ENCODE measurements at regions of chr11 and their contacts with region 1.

Region 1: GRCh38 chr11:46554205-46555055 is 39.4 kb downstream of the AMBRA1 start:
- DNase-seq: no peak
- H3K4me3 Mint-ChIP-seq: peak overlapping the region; percentile 58
- H3K27ac Mint-ChIP-seq: peak overlapping the region; percentile 65
- H3K4me1 Mint-ChIP-seq: peaks cover 49% of the 10 kb centered on the region
- H3K27me3 Mint-ChIP-seq: no peaks in the 10 kb centered on the region

Region 2: DNA sequence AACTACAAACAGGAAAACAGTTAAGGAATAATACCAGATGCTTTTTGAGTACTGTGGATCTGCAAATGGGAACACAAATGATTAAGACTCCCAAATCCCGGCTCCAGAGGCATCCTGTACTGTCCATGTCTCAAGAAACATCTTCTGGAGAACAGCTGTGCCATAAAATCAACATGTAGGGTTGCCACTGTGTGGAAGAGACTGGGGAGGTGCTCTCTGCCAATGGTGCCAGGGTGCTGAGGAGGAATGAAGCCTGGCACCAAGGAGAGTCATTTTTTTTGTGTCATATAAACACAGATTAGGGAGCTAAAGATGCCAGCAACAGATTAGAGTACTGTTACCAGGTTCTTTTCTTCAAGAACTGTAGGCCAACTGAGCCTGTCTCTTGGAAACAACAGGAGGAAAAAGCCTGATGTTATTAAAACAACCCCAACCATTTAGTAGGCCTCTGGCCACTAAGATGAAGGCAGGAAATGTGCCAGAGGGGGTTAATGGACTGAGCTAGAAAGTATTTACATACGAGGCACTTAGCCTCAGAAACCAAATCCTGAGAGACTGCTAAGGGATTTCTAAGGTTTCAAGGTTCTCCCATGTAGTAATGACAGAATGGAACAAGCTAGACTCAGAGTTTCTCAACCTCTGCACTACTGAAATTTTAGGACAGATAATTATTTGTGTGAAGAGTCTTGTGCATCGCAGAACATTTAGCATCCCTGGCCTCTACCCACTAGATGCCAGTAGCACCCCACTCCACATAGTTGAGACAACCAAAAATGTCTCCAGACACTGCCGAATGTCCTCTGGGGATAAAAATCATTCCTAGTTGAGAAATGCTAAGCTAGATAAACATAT is 108.3 kb before region 1 on chr11:
- intact Hi-C with region 1: no loop called
- DNase-seq: no peak
- H3K4me3 Mint-ChIP-seq: no peak overlapping the region
- H3K27ac Mint-ChIP-seq: peak overlapping the region; percentile 5
- H3K4me1 Mint-ChIP-seq: peaks cover 7% of the 10 kb centered on the region
- H3K27me3 Mint-ChIP-seq: no peaks in the 10 kb centered on the region

Region 3: GRCh38 chr11:46537537-46538295 is 16.7 kb before region 1 on chr11:
- intact Hi-C with region 1: no loop called
- DNase-seq: peak; percentile 89
- H3K4me3 Mint-ChIP-seq: no peak overlapping the region
- H3K27ac Mint-ChIP-seq: no peak overlapping the region
- H3K4me1 Mint-ChIP-seq: peaks cover 5% of the 10 kb centered on the region
- H3K27me3 Mint-ChIP-seq: no peaks in the 10 kb centered on the region

Region 4: GRCh38 chr11:46574656-46575055 is 20.2 kb after region 1 on chr11:
- intact Hi-C with region 1: no loop called
- DNase-seq: no peak
- H3K4me3 Mint-ChIP-seq: no peak overlapping the region
- H3K27ac Mint-ChIP-seq: no peak overlapping the region
- H3K4me1 Mint-ChIP-seq: peaks cover 20% of the 10 kb centered on the region
- H3K27me3 Mint-ChIP-seq: no peaks in the 10 kb centered on the region

Region 5: GRCh38 chr11:46593550-46594373 is 39.3 kb after region 1 on chr11 and contains the start of gene AMBRA1:
- intact Hi-C with region 1: loop called (anchors 5 kb)
- DNase-seq: peak; percentile 96
- H3K4me3 Mint-ChIP-seq: peak within 1 kb of the TSS; percentile 99
- H3K27ac Mint-ChIP-seq: peak within 1 kb of the TSS; percentile 96
- H3K4me1 Mint-ChIP-seq: peaks cover 34% of the 10 kb centered on the region
- H3K27me3 Mint-ChIP-seq: no peaks in the 10 kb centered on the region
- total RNA-seq, gene AMBRA1: 27.7 and 34.9 TPM in 2 replicates

Measured in activated CD4-positive, alpha-beta T cell treated with anti-CD3 and anti-CD28 coated beads, Interleukin-2, amount 10 ng/mL, durations not matched to agents 24 days and 14 days (primary cell).